Transverse colon (tissue), 4 donors: ENCODE measurements at regions of chr1 and their contacts with region 1.

Region 1: GRCh38 chr1:37883671-37884070 is 24.3 kb upstream of the MTF1 start:
- DNase-seq: no peak
- H3K4me3 ChIP-seq: no peak overlapping the region
- H3K27ac ChIP-seq: no peak overlapping the region
- H3K4me1 ChIP-seq: no peaks in the 10 kb centered on the region
- H3K27me3 ChIP-seq: no peaks in the 10 kb centered on the region
- CTCF ChIP-seq: no peak
- EP300 ChIP-seq: no peak
- POLR2A ChIP-seq: no peak

Region 2: GRCh38 chr1:37965301-37965700 is 81.6 kb after region 1 on chr1:
- in situ Hi-C with region 1: loop called in 1 of 4 experiments (anchors 10 kb)
- intact Hi-C with region 1: no loop called
- DNase-seq: no peak
- H3K4me3 ChIP-seq: no peak overlapping the region
- H3K27ac ChIP-seq: no peak overlapping the region
- H3K4me1 ChIP-seq: no peaks in the 10 kb centered on the region
- H3K27me3 ChIP-seq: no peaks in the 10 kb centered on the region
- CTCF ChIP-seq: no peak
- EP300 ChIP-seq: no peak
- POLR2A ChIP-seq: no peak